Mammary epithelial cell (primary cell): ENCODE measurements at regions of chr7 and their contacts with region 1.

Region 1: DNA sequence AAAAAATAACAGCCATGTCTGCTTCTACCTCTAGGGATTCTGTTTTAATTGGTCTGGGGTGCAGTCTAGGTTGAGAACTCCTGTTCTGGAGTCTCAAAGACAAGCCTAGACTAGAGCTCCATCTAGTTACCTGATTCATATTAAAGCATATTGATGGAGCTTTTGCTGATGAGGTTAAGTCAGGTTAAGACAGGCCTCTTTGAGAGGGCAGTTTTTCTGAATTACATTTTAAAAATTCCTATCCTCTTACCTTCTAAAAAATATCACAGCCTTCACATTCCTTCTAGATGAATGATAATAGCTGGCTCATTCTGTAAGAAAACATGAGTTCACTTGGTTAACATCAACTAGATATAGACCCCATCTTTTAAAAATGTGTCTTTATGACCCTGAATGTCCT is 28.9 kb downstream of the MGAM start:
- DNase-seq: peak; percentile 92
- H3K4me3 ChIP-seq: no peak overlapping the region
- H3K27ac ChIP-seq: peak overlapping the region; percentile 92
- H3K4me1 ChIP-seq: peaks cover 44% of the 10 kb centered on the region
- H3K27me3 ChIP-seq: no peaks in the 10 kb centered on the region
- CTCF ChIP-seq: peak; percentile 17 to 46

Region 2: DNA sequence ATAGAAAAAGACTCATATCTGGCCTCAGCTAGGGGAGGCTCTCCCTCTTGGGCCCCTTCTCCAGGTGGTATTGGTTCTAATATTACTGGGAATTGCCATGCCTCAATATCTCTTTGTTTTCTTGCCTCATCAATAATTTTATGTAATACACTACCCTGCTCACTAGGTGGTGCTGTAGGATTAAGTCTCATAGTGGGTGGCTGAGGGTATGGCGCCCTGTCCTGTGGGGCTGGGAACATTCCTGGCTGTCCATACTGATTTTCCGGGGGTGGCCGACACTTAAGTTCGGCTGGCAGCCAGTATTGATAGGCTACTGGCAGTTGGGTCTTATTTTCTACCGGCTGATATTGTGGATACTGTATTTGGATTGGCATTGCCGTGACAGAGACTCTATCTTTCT is 269.6 kb before region 1 on chr7:
- CTCF ChIA-PET with region 1: no interaction called
- dilution Hi-C with region 1: no loop called
- in situ Hi-C with region 1: no loop called
- intact Hi-C with region 1: loop called (anchors 1 kb)
- DNase-seq: peak; percentile 11
- H3K4me3 ChIP-seq: no peak overlapping the region
- H3K27ac ChIP-seq: no peak overlapping the region
- H3K4me1 ChIP-seq: no peaks in the 10 kb centered on the region
- H3K27me3 ChIP-seq: no peaks in the 10 kb centered on the region
- CTCF ChIP-seq: peak; percentile 42 to 62

Region 3: DNA sequence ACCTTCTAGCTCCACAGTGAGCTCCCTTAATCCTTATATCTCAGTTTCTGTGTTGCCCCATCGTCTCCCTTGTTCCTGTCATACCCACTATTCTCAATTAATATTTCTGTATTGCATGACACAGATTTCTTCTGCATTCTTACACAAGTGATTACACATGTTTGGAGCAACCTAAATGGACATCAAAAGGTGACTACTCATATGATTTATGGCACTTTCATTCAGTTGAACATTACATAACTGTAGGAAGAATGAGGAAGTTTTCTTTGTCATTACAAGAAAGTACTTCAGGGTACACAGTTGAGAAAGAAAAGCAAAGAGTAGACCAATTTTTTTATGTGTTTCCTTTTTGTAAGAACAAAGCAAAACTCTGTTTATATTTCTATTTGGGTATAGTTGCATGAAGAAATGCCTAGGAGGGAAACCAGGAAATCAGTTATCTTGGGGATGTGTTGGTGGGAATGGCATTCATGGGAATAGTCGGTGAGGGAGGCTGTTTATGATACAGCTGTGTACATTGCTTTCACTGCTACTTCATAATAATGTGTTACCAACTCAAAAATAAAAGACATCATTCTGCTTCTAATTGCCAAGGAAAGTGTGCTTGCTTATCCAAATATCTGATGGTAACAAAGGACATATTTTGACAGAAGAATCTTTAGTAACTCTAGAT is 159.6 kb before region 1 on chr7:
- CTCF ChIA-PET with region 1: no interaction called
- dilution Hi-C with region 1: no loop called
- in situ Hi-C with region 1: no loop called
- intact Hi-C with region 1: no loop called
- DNase-seq: peak; percentile 78
- H3K4me3 ChIP-seq: no peak overlapping the region
- H3K27ac ChIP-seq: peak overlapping the region; percentile 51
- H3K4me1 ChIP-seq: no peaks in the 10 kb centered on the region
- H3K27me3 ChIP-seq: no peaks in the 10 kb centered on the region
- CTCF ChIP-seq: no peak

Region 4: GRCh38 chr7:142001163-142001874 is 23.2 kb before region 1 on chr7:
- CTCF ChIA-PET with region 1: interaction called, 8 read pairs
- dilution Hi-C with region 1: no loop called
- in situ Hi-C with region 1: no loop called
- intact Hi-C with region 1: loop called (anchors 2 kb)
- DNase-seq: peak; percentile 75
- H3K4me3 ChIP-seq: no peak overlapping the region
- H3K27ac ChIP-seq: peak overlapping the region; percentile 81
- H3K4me1 ChIP-seq: peaks cover 28% of the 10 kb centered on the region
- H3K27me3 ChIP-seq: no peaks in the 10 kb centered on the region
- CTCF ChIP-seq: no peak